Activated T-helper 1 cell treated with anti-CD3 and anti-CD28 coated beads, Interleukin-12 subunit alpha, Interleukin-12 subunit beta, Interleukin-2, Interleukin-4 antibody, amounts not matched to agents 30 ng/mL and 10 ng/mL and 1 ng/mL, durations not matched to agents 14 hours and 24 hours and 36 hours (primary cell): ENCODE measurements at regions of chr13 and their contacts with region 1.

Region 1: DNA sequence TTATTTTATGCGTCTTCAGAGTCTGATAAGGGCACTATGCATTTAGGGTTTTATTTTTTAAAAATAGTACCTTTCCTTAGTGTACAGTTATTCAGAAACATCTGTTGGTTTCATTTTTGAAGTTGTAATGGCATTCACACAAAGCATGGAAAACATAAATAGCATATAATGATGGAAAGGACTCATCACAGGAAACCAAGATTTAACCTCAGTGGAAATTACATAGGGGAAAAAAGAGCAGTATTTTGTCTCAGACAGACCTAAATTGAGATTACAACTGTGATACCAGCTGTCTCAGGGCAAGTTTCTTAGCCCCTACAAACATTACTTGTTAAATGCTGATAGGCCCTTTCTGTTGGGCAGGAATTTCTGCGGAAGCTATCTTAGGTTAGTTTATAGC is 57.2 kb downstream of the NHLRC3 start:
- DNase-seq: no peak
- H3K4me3 Mint-ChIP-seq: peak overlapping the region; percentile 68
- H3K27ac Mint-ChIP-seq: peak overlapping the region; percentile 92
- H3K4me1 Mint-ChIP-seq: peaks cover 35% of the 10 kb centered on the region
- H3K27me3 Mint-ChIP-seq: no peaks in the 10 kb centered on the region

Region 2: DNA sequence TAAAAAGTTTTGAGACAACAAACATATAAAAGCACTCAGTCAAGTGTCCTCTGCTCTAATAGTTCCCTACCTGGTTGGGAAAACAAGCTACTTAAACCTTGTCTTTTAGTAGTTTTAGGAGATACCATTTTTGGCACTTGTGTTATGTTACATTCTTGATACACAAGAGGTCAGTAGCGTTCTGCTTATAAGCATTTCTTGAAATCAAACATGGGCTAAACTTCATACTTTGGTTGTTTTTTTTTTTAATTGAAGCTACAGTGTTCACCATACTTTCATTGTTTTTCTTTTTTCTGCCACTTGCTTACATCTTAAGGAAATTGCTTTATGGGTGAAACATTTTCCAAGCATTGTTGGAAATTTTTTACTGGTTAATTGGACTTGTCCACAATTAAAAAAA is 44.3 kb before region 1 on chr13:
- intact Hi-C with region 1: loop called (anchors 2 kb)
- DNase-seq: no peak
- H3K4me3 Mint-ChIP-seq: no peak overlapping the region
- H3K27ac Mint-ChIP-seq: no peak overlapping the region
- H3K4me1 Mint-ChIP-seq: peaks cover 6% of the 10 kb centered on the region
- H3K27me3 Mint-ChIP-seq: no peaks in the 10 kb centered on the region

Region 3: DNA sequence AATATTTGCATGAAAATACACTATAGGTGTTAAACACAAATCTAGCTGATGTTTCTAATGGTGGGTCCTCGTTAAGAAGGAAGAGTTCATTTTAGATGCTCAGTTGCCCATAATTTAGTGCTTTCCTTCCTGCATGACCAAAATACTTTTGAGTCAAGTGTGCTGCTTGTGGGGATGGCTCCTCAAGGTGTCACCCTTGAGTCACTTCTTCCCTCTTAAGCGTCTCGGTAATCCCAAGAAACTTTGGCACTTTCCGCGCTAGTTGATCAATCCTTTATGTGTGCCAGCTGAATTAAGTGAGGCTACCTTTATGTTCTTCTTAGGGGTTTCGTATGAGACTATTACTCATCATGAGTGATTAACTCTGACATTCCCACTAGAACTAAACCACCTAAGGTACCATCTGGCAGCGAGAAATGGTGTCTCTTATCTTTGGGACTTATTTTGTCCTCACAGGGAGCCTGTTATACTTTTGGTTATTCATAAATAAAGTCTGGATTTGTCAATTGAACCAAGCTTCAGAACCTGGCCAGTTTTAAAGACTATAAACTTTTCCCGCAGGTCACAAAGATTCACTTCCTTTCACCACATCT is 49.5 kb after region 1 on chr13:
- intact Hi-C with region 1: loop called (anchors 5 kb)
- DNase-seq: peak; percentile 3
- H3K4me3 Mint-ChIP-seq: no peak overlapping the region
- H3K27ac Mint-ChIP-seq: no peak overlapping the region
- H3K4me1 Mint-ChIP-seq: peaks cover 18% of the 10 kb centered on the region
- H3K27me3 Mint-ChIP-seq: peaks cover 16% of the 10 kb centered on the region

Region 4: DNA sequence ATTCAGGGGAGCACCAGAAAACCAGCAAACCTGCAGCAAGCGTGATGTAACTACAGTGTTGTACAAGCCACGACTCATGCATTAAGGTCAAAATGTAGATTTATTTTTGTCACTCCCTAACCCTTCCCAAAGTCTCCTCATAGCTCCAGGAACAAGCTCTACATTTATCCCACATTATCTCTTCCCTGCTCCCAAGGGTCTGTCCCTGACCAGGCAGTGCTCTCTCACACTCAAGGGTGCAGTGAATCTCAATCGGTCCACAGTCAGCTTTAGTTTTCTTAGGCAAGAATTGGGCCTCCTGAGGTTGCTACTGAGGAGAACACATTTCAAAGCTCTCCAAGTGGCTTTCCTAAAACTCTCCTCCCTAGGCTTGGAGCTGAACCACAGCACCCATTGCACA is 162.1 kb after region 1 on chr13:
- intact Hi-C with region 1: loop called (anchors 1 kb)
- DNase-seq: no peak
- H3K4me3 Mint-ChIP-seq: no peak overlapping the region
- H3K27ac Mint-ChIP-seq: no peak overlapping the region
- H3K4me1 Mint-ChIP-seq: peaks cover 14% of the 10 kb centered on the region
- H3K27me3 Mint-ChIP-seq: peaks cover 3% of the 10 kb centered on the region

Region 5: DNA sequence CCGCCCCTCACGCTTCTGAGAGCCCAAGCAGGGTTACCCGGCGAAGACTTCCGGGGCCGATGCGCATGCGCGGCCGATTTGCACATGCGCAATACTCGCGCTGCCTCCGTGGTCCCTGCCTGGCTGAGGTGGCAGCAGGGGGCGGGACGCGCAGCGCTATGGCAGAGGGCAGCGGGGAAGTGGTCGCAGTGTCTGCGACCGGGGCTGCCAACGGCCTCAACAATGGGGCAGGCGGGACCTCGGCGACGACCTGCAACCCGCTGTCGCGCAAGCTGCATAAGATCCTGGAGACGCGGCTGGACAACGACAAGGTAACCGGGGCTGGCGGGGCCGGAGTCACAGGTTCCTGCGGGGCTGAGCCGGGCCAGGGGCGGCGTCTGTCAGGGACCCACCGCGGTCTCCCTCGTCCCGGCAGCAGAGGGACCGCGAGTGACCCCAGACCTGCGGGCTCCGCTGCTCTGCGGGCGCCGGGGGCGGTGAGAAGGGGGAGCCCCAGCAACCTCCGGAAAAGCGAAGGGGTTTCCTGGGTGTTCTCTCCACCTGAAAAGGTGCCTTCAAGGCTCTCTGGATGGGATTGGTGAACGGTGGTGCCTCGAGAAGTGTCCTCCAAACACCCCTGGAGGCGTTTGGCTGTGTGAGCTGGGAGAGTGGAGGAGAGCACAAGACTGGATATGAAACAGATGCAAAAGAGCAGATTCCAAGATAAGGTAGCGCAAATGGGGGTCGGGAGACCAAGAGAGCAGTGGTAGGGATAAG is 560.2 kb after region 1 on chr13 and contains the start of gene COG6:
- intact Hi-C with region 1: loop called (anchors 5 kb)
- DNase-seq: peak; percentile 91
- H3K4me3 Mint-ChIP-seq: peak within 1 kb of the TSS; percentile 96
- H3K27ac Mint-ChIP-seq: peak within 1 kb of the TSS; percentile 87
- H3K4me1 Mint-ChIP-seq: peaks cover 17% of the 10 kb centered on the region
- H3K27me3 Mint-ChIP-seq: peaks cover 4% of the 10 kb centered on the region
- total RNA-seq, gene COG6: 25.6 and 31.8 TPM in 2 replicates

Region 6: GRCh38 chr13:39942552-39943273 is 847.2 kb after region 1 on chr13:
- intact Hi-C with region 1: no loop called
- DNase-seq: peak; percentile 54
- H3K4me3 Mint-ChIP-seq: no peak overlapping the region
- H3K27ac Mint-ChIP-seq: no peak overlapping the region
- H3K4me1 Mint-ChIP-seq: peaks cover 6% of the 10 kb centered on the region
- H3K27me3 Mint-ChIP-seq: peaks cover 4% of the 10 kb centered on the region